Psoas muscle (tissue), 8 donors: ENCODE measurements at regions of chrX and their contacts with region 1.

Region 1: DNA sequence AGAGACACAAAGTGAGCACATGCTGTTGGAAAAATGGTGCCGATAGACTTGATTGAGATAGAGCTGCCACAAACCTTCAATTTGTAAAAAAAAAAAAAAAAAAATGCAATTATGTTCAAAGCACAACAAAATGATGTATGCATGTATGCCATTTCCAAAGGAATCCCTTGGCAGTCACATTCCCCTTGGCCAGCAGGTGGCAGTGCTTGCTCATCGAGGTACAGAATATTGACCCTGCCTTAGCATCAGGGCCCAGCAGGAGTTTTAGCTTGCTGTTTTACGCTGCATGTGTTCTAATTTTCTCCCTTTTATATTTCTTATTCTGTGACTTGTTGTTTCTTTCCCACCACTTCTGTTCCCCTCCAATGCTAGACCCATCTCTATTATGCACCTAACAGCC is 34.5 kb upstream of the CYBB start:
- DNase-seq: peak; percentile 62 to 80
- ATAC-seq: peak in 3 of 4 donors; percentile 53 to 84 (median 68)
- H3K4me3 ChIP-seq: no peak overlapping the region
- H3K27ac ChIP-seq: no peak overlapping the region
- H3K4me1 ChIP-seq: no peaks in the 10 kb centered on the region
- H3K27me3 ChIP-seq: peaks cover 0 to 12% (median 0%) of the 10 kb centered on the region in 3 donors
- CTCF ChIP-seq: peak; percentile 80

Region 2: DNA sequence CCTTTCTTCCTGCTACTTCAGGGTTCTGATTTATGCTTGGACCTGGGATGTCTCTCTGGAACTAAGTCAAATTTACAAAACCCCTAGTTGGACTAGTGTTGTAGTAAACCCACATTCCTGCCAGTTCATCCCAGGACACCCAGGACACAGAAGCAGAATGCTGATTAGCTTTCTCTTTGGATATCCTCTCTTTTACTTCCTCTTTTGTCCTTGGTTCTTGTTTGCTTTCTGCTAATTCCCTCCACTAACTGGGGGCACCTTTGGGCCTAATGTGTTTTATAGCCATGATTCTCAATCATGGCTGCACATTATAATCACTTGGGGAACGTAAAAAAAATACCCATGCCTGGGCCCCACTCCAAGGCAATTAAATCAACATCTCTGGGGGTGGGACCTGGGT is 131.4 kb before region 1 on chrX:
- intact Hi-C with region 1: no loop called
- DNase-seq: no peak
- ATAC-seq: no peak
- H3K4me3 ChIP-seq: no peak overlapping the region
- H3K27ac ChIP-seq: no peak overlapping the region
- H3K4me1 ChIP-seq: no peaks in the 10 kb centered on the region
- H3K27me3 ChIP-seq: peaks cover 0 to 5% (median 0%) of the 10 kb centered on the region in 3 donors
- CTCF ChIP-seq: no peak

Region 3: GRCh38 chrX:38175140-38175539 is 429.8 kb after region 1 on chrX:
- intact Hi-C with region 1: loop called (anchors 5 to 10 kb)
- DNase-seq: no peak
- ATAC-seq: no peak
- H3K4me3 ChIP-seq: no peak overlapping the region
- H3K27ac ChIP-seq: no peak overlapping the region
- H3K4me1 ChIP-seq: no peaks in the 10 kb centered on the region
- H3K27me3 ChIP-seq: peaks cover 0 to 26% (median 0%) of the 10 kb centered on the region in 3 donors
- CTCF ChIP-seq: no peak

Region 4: GRCh38 chrX:38636949-38637819 is 891.8 kb after region 1 on chrX:
- intact Hi-C with region 1: no loop called
- DNase-seq: no peak
- ATAC-seq: peak; percentile 24 to 44 (median 29)
- H3K4me3 ChIP-seq: no peak overlapping the region
- H3K27ac ChIP-seq: peak overlapping the region; percentile 1
- H3K4me1 ChIP-seq: peaks cover 15% of the 10 kb centered on the region
- H3K27me3 ChIP-seq: peaks cover 0 to 9% (median 0%) of the 10 kb centered on the region in 3 donors
- CTCF ChIP-seq: no peak